Naive thymus-derived CD8-positive, alpha-beta T cell (primary cell): ENCODE measurements at regions of chr6 and their contacts with region 1.

Region 1: DNA sequence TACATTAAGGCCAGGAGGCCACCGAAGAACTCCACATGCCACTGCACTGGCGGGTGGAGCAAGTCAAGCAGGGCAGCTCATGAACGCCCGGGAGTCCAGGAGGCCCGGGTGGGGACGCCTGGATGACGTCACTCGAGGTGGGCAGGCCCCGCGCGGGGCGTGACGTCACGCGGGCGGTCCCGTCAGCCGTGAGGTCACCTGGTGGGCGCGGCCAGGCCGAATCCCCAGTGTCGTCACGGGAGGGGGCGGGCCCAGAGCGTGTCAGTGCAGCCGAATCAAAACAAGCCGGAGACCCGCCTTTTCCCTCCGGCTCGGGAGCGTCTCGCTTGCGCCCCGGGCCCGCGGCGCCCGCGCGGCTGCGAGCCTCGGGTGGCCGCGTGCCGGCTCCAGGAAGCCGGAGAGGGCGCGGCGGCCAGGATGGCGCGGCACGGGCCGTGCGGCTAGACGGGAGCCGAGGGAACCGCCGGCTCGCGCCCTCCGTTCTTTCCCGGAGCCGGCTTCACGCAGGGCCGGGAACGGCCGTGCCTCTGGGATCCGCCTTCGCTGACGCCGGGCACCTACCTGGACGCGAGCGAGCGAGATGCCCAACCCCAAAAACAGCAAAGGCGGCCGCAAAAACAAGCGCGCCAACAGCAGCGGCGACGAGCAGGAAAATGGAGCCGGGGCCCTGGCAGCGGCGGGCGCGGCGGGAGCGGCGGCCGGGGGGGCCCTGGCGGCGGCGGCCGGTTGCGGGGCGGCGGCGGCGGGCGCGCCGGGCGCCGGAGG is at the start of gene HECA:
- DNase-seq: peak; percentile 99 to 100 (median 100)
- ATAC-seq: peak; percentile 62 to 78
- H3K4me3 Mint-ChIP-seq: peak within 1 kb of the TSS; percentile 86 to 100 (median 96)
- H3K27ac Mint-ChIP-seq: peak within 1 kb of the TSS; percentile 95 to 100 (median 99)
- H3K4me1 Mint-ChIP-seq: peaks cover 39 to 81% (median 68%) of the 10 kb centered on the region in 4 donors
- H3K27me3 Mint-ChIP-seq: peaks cover 0 to 3% (median 0%) of the 10 kb centered on the region in 5 donors
- polyA plus RNA-seq, gene HECA: 4.6 to 8.5 (median 5.5) TPM

Region 2: DNA sequence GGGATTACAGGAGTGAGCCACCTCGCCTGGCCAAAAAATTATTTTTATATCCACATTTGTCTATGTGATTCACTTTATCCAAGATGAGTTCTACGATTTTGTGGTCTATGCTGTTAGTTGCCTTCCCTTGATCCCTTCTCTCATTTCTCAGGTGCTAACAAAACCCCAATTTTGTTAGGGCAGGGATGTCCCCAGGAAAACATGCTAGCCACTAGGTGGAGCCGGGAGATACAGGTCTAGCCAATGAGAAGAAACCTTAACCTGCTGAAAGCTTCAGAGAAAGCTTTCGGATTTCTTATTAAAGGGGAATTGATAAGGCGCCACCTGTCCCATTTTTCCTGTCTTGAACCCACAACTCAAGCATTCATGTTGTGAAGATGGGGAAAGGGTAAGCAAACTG is 1473.4 kb before region 1 on chr6:
- POLR2A ChIA-PET with region 1: no interaction called
- DNase-seq: peak in 7 of 10 donors; percentile 12 to 75 (median 27)
- ATAC-seq: peak; percentile 58 to 59
- H3K4me3 Mint-ChIP-seq: no peak overlapping the region
- H3K27ac Mint-ChIP-seq: no peak overlapping the region
- H3K4me1 Mint-ChIP-seq: no peaks in the 10 kb centered on the region
- H3K27me3 Mint-ChIP-seq: peaks cover 0 to 3% (median 0%) of the 10 kb centered on the region in 5 donors

Region 3: GRCh38 chr6:138987640-138988468 is 147.1 kb before region 1 on chr6 and contains the start of gene REPS1:
- POLR2A ChIA-PET with region 1: interaction called, 10 read pairs
- DNase-seq: peak; percentile 85 to 96 (median 92)
- ATAC-seq: peak; percentile 84 to 87
- H3K4me3 Mint-ChIP-seq: peak within 1 kb of the TSS in 9 of 10 donors; percentile 87 to 96 (median 91)
- H3K27ac Mint-ChIP-seq: peak within 1 kb of the TSS in 9 of 10 donors; percentile 61 to 96 (median 93)
- H3K4me1 Mint-ChIP-seq: peaks cover 8 to 23% (median 15%) of the 10 kb centered on the region in 4 donors
- H3K27me3 Mint-ChIP-seq: no peaks in the 10 kb centered on the region
- polyA plus RNA-seq, gene REPS1: 19.4 to 45.3 (median 28.4) TPM

Region 4: DNA sequence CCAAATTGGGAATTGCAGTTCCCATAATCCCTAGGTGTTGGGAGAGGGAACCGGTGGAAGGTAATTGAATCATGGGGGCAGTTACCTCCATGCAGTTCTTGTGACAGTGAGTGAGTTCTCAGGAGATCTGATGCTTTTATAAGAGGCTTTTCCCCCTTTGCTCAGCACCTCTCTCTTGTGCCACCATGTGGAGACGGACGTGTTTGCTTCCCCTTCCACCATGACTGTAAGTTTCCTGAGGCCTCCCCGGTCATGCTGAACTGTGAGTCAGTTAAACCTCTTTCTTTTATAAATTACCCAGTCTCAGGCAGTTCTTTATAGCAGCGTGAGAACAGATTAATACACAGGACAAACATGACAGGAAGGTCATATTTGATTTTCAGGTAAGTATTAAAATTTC is 25.4 kb before region 1 on chr6:
- POLR2A ChIA-PET with region 1: interaction called, 26 read pairs
- DNase-seq: peak in 4 of 10 donors; percentile 19 to 38 (median 34)
- ATAC-seq: no peak
- H3K4me3 Mint-ChIP-seq: peak overlapping the region in 2 of 10 donors; percentile 22 to 30
- H3K27ac Mint-ChIP-seq: peak overlapping the region in 8 of 10 donors; percentile 60 to 96 (median 81)
- H3K4me1 Mint-ChIP-seq: peaks cover 21 to 71% (median 55%) of the 10 kb centered on the region in 4 donors
- H3K27me3 Mint-ChIP-seq: no peaks in the 10 kb centered on the region

Region 5: DNA sequence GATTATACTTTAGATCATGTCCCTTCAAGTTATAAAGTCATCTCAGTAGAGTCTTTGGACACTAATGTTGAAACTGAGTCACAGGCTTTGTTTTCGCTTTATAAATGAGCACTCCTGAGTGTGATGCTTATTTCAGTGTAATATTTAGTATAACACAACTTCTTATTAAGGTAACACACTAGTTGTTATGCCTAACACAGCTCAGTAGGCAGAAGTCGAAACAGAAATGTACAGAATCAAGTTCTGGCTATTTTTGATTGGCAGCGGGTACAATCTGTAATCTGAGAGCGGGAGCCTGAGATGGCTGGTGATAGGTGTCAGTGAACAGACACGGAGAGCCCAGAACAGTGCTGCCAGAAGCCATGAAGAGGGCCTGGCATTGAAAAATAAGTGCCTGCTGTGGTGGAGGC is 11.3 kb after region 1 on chr6:
- POLR2A ChIA-PET with region 1: interaction called, 16 read pairs
- DNase-seq: no peak
- ATAC-seq: peak in 1 of 2 donors; percentile 23
- H3K4me3 Mint-ChIP-seq: peak overlapping the region; percentile 43 to 83 (median 77)
- H3K27ac Mint-ChIP-seq: peak overlapping the region; percentile 18 to 88 (median 54)
- H3K4me1 Mint-ChIP-seq: peaks cover 59 to 95% (median 93%) of the 10 kb centered on the region in 4 donors
- H3K27me3 Mint-ChIP-seq: no peaks in the 10 kb centered on the region

Region 6: GRCh38 chr6:139161817-139162284 is 26.9 kb after region 1 on chr6:
- POLR2A ChIA-PET with region 1: interaction called, 105 read pairs
- DNase-seq: peak; percentile 25 to 76 (median 60)
- ATAC-seq: peak; percentile 53 to 65
- H3K4me3 Mint-ChIP-seq: peak overlapping the region; percentile 70 to 95 (median 83)
- H3K27ac Mint-ChIP-seq: peak overlapping the region; percentile 85 to 97 (median 94)
- H3K4me1 Mint-ChIP-seq: peaks cover 51 to 95% (median 91%) of the 10 kb centered on the region in 4 donors
- H3K27me3 Mint-ChIP-seq: no peaks in the 10 kb centered on the region

Region 7: GRCh38 chr6:139230391-139230840 is 95.4 kb after region 1 on chr6:
- POLR2A ChIA-PET with region 1: no interaction called
- DNase-seq: peak in 2 of 10 donors; percentile 5 to 9
- ATAC-seq: no peak
- H3K4me3 Mint-ChIP-seq: no peak overlapping the region
- H3K27ac Mint-ChIP-seq: peak overlapping the region in 2 of 10 donors; percentile 20 to 29
- H3K4me1 Mint-ChIP-seq: peaks cover 0 to 9% (median 2%) of the 10 kb centered on the region in 4 donors
- H3K27me3 Mint-ChIP-seq: no peaks in the 10 kb centered on the region